ENCODE measurements at regions of chr7 and their contacts with region 1.

Region 1: GRCh38 chr7:45872116-45873034 is 507 bp downstream of the CCDC201 start:
- DNase-seq: no peak
- ATAC-seq: no peak
- H3K4me3 ChIP-seq: no peak overlapping the region
- H3K27ac ChIP-seq: no peak overlapping the region
- H3K4me1 ChIP-seq: no peaks in the 10 kb centered on the region
- H3K27me3 ChIP-seq: no peaks in the 10 kb centered on the region
- CTCF ChIP-seq: no peak
- POLR2A ChIP-seq: no peak

Region 2: GRCh38 chr7:45663167-45663921 is 209.0 kb before region 1 on chr7:
- in situ Hi-C with region 1: loop called in 1 of 4 experiments (anchors 25 kb)
- intact Hi-C with region 1: no loop called
- DNase-seq: no peak
- ATAC-seq: no peak
- H3K4me3 ChIP-seq: no peak overlapping the region
- H3K27ac ChIP-seq: no peak overlapping the region
- H3K4me1 ChIP-seq: no peaks in the 10 kb centered on the region
- H3K27me3 ChIP-seq: no peaks in the 10 kb centered on the region
- CTCF ChIP-seq: peak; percentile 28 to 60 (median 37)
- POLR2A ChIP-seq: no peak

Measured in gastrocnemius medialis (tissue), 4 donors.